Activated T-helper 2 cell treated with anti-CD3 and anti-CD28 coated beads, Interferon-gamma antibody, Interleukin-2, Interleukin-4, amounts not matched to agents 10 μg/mL and 5 μg/mL and 100 μg/mL, durations not matched to agents 14 hours and 24 hours and 36 hours (primary cell): ENCODE measurements at regions of chr14 and their contacts with region 1.

Region 1: GRCh38 chr14:31456841-31457664 is at the start of gene DTD2:
- DNase-seq: peak; percentile 86
- H3K4me3 Mint-ChIP-seq: peak within 1 kb of the TSS; percentile 98
- H3K27ac Mint-ChIP-seq: peak within 1 kb of the TSS; percentile 97
- H3K4me1 Mint-ChIP-seq: peaks cover 24% of the 10 kb centered on the region
- H3K27me3 Mint-ChIP-seq: peaks cover 1% of the 10 kb centered on the region
- total RNA-seq, gene DTD2: 26.7 and 26.9 TPM in 2 replicates

Region 2: GRCh38 chr14:31127690-31128089 is 329.4 kb before region 1 on chr14:
- intact Hi-C with region 1: loop called (anchors 5 kb)
- DNase-seq: peak; percentile 53
- H3K4me3 Mint-ChIP-seq: no peak overlapping the region
- H3K27ac Mint-ChIP-seq: peak overlapping the region; percentile 44
- H3K4me1 Mint-ChIP-seq: peaks cover 35% of the 10 kb centered on the region
- H3K27me3 Mint-ChIP-seq: no peaks in the 10 kb centered on the region

Region 3: GRCh38 chr14:31380106-31380505 is 76.9 kb before region 1 on chr14:
- intact Hi-C with region 1: loop called (anchors 5 kb)
- DNase-seq: no peak
- H3K4me3 Mint-ChIP-seq: no peak overlapping the region
- H3K27ac Mint-ChIP-seq: no peak overlapping the region
- H3K4me1 Mint-ChIP-seq: peaks cover 10% of the 10 kb centered on the region
- H3K27me3 Mint-ChIP-seq: no peaks in the 10 kb centered on the region

Region 4: DNA sequence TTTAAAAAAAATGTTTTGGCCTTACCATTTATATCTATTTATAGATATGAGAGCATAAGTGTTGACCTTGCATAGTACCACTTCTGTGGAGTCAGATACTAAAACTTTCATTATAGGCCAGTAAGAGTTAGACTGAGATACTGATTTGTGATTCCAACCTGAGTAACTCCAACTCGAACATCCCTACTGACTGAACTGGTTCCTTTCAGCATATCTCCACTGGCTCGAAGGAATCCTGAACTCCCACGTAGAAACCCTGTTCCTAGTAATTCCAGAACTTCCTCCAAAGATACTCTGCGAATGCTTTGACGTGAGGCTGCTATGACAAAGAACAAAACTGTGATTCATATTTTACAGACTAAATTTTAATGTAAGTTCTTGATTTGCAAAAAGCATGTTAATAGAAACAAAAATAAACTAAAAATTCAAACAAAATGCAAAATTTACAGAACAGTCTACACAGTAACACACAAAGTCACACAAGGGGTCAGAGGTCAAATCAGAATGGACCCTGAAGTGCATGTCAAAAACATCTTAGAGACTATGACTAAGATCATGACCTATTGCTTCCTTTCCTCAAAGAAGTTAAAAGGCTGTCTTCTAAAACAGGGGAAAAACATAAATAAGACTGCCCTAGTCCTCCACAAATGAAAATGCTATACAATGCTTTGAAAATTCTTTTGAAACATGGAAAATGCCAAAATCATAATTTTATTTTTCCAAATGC is 68.2 kb before region 1 on chr14:
- intact Hi-C with region 1: loop called (anchors 2 kb)
- DNase-seq: no peak
- H3K4me3 Mint-ChIP-seq: no peak overlapping the region
- H3K27ac Mint-ChIP-seq: peak overlapping the region; percentile 73
- H3K4me1 Mint-ChIP-seq: peaks cover 30% of the 10 kb centered on the region
- H3K27me3 Mint-ChIP-seq: no peaks in the 10 kb centered on the region

Region 5: DNA sequence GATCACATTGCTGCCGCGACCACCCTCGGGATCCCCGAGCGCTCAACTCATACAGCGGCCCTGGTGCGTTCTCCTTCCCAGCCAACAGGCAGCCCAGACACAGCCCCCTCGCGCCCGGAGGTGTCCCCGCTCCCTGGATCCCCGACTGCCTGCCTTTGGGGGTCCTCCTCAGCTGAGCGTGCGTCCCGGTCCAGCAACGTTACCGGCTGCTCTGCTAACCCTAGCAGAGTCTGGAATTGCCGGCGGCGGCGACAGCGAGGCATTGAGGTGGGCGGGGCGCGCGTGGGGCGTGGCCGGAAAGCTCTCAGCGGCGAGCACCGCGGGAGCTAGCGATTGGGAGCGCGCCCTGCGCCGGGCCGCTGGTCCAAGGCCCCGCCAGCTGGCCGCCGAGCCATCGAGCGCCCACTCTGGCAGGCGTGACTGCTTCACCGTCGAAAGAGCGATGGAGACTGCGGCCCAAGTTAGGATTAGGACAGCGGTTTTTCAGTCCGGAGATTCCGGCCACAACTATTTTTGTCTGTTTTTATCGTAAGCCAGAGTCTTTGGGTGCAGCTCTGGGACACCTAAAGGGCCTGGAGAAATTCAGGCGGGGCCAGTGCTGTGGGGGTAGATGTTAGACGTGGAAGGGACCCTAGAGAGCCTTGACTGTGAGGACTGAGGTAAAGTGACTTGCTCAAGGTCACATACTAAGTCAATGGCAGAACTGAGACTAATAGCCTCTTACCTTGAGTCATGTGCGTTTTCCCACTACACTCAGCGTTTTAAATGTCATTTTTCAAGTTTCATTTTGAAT is 36.5 kb before region 1 on chr14 and contains the start of gene HEATR5A:
- intact Hi-C with region 1: loop called (anchors 1 kb)
- DNase-seq: peak; percentile 90
- H3K4me3 Mint-ChIP-seq: peak within 1 kb of the TSS; percentile 95
- H3K27ac Mint-ChIP-seq: peak within 1 kb of the TSS; percentile 90
- H3K4me1 Mint-ChIP-seq: peaks cover 24% of the 10 kb centered on the region
- H3K27me3 Mint-ChIP-seq: no peaks in the 10 kb centered on the region
- total RNA-seq, gene HEATR5A: 23.1 TPM in 2 replicates

Region 6: DNA sequence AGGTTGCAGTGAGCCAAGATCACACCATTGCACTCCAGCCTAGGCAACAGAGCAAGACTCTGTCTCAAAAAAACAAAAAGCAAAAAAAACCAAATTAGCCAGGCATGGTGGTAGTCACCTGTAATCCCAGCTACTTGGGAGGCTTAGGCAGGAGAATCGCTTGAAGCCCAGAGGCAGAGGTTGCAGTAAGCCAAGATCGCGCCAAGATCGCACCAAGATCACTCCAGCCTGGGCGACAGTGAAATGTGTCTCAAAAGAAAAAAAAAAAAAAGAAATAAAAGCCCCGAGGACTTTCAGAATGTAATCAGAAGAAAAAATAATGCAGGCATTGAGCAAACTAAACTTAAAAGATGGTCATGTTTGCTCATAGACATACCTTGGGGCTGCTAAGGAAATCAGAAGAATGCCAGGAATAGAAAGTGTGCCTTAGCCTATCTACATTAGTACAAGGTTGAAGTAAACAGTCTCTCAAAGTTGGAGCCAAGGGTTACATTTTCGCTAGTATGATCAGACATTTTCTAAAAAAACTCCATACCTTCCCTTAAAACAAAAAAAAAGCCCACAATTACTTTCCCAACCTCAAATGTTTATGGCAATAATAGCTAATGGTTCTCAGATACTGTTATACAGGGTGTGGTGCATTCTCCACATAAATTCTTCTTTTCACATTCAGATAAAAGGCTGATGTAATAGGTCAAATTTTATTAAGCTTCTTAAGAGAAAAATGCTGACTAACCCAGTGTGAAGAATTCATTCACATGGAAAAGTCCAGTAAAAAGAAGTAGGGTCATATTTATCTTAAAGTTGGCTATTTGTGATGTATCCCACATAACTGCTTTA is 15.6 kb before region 1 on chr14:
- intact Hi-C with region 1: no loop called
- DNase-seq: no peak
- H3K4me3 Mint-ChIP-seq: no peak overlapping the region
- H3K27ac Mint-ChIP-seq: no peak overlapping the region
- H3K4me1 Mint-ChIP-seq: peaks cover 1% of the 10 kb centered on the region
- H3K27me3 Mint-ChIP-seq: no peaks in the 10 kb centered on the region

Region 7: DNA sequence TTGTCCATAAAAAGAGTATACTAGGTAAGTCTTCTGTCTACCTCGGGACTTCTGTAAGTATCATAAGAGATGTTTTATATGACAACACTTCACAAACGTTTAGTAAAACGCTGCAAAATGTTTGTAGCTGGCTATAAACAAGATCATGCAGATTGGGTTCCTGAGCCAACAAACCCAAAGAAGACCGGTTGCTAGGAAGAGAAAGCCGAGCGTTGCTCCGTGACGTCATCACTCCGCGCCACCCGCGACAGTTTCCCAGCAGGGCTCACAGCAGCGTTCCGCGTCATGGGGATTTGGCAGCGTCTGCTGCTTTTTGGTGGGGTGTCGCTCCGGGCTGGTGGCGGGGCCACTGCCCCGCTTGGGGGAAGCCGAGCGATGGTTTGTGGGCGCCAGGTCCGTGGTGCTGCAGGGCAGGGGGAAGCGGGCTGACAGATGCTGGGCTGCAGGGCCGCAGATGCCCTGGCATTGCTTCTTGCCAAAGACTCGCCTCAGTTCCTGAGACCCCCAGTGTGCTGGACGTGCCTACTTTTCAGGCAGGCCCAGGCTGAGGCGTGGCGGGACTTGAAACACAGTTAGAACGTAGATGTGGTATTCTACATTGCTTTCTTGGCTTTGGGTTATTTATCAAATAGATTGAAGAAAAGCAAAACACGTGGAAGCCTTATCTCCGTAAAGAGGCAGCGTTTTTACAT is 104.2 kb after region 1 on chr14 and contains the start of gene NUBPL:
- intact Hi-C with region 1: loop called (anchors 1 kb)
- DNase-seq: peak; percentile 96
- H3K4me3 Mint-ChIP-seq: peak within 1 kb of the TSS; percentile 90
- H3K27ac Mint-ChIP-seq: peak within 1 kb of the TSS; percentile 95
- H3K4me1 Mint-ChIP-seq: peaks cover 21% of the 10 kb centered on the region
- H3K27me3 Mint-ChIP-seq: peaks cover 8% of the 10 kb centered on the region
- total RNA-seq, gene NUBPL: 8.7 and 9.5 TPM in 2 replicates

Region 8: GRCh38 chr14:31611778-31612433 is 154.9 kb after region 1 on chr14:
- intact Hi-C with region 1: no loop called
- DNase-seq: no peak
- H3K4me3 Mint-ChIP-seq: no peak overlapping the region
- H3K27ac Mint-ChIP-seq: no peak overlapping the region
- H3K4me1 Mint-ChIP-seq: no peaks in the 10 kb centered on the region
- H3K27me3 Mint-ChIP-seq: no peaks in the 10 kb centered on the region

Region 9: DNA sequence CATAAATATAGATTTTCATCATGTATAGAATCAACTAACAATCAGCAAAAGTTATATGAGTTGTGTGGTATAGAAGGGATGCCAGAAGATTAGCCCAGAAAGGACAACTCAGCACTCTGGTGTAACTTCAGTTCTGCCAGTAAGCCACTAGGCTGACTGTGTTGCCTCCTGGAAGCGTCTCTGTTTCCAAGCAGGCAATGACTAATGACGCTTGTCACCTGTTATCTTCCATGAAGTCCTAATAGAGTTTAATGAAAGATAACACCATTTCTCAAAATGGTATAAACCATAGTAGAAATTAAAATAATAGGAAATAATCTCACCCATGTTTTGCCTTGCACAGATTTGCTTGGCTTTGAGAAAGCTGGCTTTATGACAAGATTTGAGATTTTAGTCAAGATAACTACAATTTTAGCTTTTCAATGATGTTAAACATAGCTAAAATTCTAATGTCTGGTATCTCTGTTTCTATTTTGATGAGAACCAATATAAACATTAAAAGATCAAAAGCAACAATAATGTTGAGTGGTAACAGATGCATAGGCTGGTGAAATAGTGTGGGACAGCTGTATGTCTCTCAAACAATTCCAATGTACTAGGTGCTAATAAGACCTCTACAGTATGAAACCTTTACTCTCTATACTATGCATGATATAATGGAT is 735.8 kb after region 1 on chr14:
- intact Hi-C with region 1: no loop called
- DNase-seq: no peak
- H3K4me3 Mint-ChIP-seq: no peak overlapping the region
- H3K27ac Mint-ChIP-seq: no peak overlapping the region
- H3K4me1 Mint-ChIP-seq: peaks cover 9% of the 10 kb centered on the region
- H3K27me3 Mint-ChIP-seq: peaks cover 1% of the 10 kb centered on the region